Activated CD4-positive, alpha-beta T cell treated with anti-CD3 and anti-CD28 coated beads, Interleukin-2, amount 10 ng/mL, durations not matched to agents 24 days and 14 days (primary cell): ENCODE measurements at regions of chr19 and their contacts with region 1.

Region 1: GRCh38 chr19:49451430-49452181 is at the start of gene PIH1D1:
- DNase-seq: peak; percentile 98
- H3K4me3 Mint-ChIP-seq: peak within 1 kb of the TSS; percentile 91
- H3K27ac Mint-ChIP-seq: peak within 1 kb of the TSS; percentile 100
- H3K4me1 Mint-ChIP-seq: peaks cover 38% of the 10 kb centered on the region
- H3K27me3 Mint-ChIP-seq: no peaks in the 10 kb centered on the region
- total RNA-seq, gene PIH1D1: 134 and 135 TPM in 2 replicates

Region 2: DNA sequence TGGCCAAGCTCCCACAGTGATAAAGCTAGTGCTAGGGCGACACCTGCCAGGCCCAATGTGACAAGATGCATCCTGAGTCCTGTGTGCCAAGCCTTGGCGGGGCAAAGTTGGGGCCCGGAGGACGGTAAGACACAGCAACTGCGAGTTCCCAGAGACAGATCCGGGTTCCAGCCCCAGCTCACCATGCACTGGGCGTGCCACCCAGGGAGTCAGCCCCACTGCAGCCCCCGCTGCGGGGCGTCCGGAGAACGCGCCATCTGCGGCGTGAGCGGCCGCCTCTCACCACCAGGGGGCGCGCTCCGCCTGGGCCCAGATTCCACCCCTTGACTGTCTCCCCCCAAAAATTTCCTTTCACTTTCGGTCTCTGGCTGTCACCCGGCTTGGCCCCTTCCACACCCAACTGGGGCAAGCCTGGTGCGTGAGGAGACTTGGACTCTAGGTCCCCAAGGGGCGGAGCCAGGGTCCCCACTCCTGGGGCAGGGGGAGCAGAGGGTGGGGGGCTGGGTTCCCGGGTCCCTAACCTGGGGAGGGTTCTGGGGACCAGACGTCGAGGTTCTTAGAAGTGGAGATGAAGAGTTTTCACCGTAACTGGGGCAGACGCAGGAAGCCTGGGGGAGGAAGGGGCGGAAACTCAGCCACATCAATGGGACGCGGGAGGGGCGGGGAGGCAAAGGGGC is 22.4 kb after region 1 on chr19 and contains the start of gene FLT3LG:
- intact Hi-C with region 1: loop called (anchors 1 kb)
- DNase-seq: peak; percentile 99
- H3K4me3 Mint-ChIP-seq: peak within 1 kb of the TSS; percentile 97
- H3K27ac Mint-ChIP-seq: peak within 1 kb of the TSS; percentile 90
- H3K4me1 Mint-ChIP-seq: peaks cover 54% of the 10 kb centered on the region
- H3K27me3 Mint-ChIP-seq: no peaks in the 10 kb centered on the region
- total RNA-seq, gene FLT3LG: 51.8 and 57.6 TPM in 2 replicates

Region 3: GRCh38 chr19:49487277-49488045 is 35.9 kb after region 1 on chr19 and contains the start of gene RPL13A:
- intact Hi-C with region 1: loop called (anchors 5 kb)
- DNase-seq: peak; percentile 100
- H3K4me3 Mint-ChIP-seq: peak within 1 kb of the TSS; percentile 98
- H3K27ac Mint-ChIP-seq: peak within 1 kb of the TSS; percentile 98
- H3K4me1 Mint-ChIP-seq: peaks cover 31% of the 10 kb centered on the region
- H3K27me3 Mint-ChIP-seq: peaks cover 3% of the 10 kb centered on the region
- total RNA-seq, gene RPL13A: 3,031 and 3,032 TPM in 2 replicates

Region 4: GRCh38 chr19:49497047-49497788 is 45.6 kb after region 1 on chr19:
- intact Hi-C with region 1: loop called (anchors 2 kb)
- DNase-seq: peak; percentile 93
- H3K4me3 Mint-ChIP-seq: peak overlapping the region; percentile 98
- H3K27ac Mint-ChIP-seq: peak overlapping the region; percentile 99
- H3K4me1 Mint-ChIP-seq: peaks cover 57% of the 10 kb centered on the region
- H3K27me3 Mint-ChIP-seq: no peaks in the 10 kb centered on the region